ENCODE measurements at regions of chr9 and their contacts with region 1.

Region 1: GRCh38 chr9:118395415-118395814 is 691.2 kb downstream of the TLR4 start:
- DNase-seq: peak; percentile 65
- ATAC-seq: peak; percentile 97
- H3K4me3 ChIP-seq: no peak overlapping the region
- H3K27ac ChIP-seq: no peak overlapping the region
- H3K4me1 ChIP-seq: no peaks in the 10 kb centered on the region
- H3K27me3 ChIP-seq: no peaks in the 10 kb centered on the region
- CTCF ChIP-seq: no peak
- EP300 ChIP-seq: peak in 1 of 2 experiments; percentile 58; a peak in 1 of 4 replicates
- POLR2A ChIP-seq: no peak
- RAD21 ChIP-seq: no peak

Region 2: DNA sequence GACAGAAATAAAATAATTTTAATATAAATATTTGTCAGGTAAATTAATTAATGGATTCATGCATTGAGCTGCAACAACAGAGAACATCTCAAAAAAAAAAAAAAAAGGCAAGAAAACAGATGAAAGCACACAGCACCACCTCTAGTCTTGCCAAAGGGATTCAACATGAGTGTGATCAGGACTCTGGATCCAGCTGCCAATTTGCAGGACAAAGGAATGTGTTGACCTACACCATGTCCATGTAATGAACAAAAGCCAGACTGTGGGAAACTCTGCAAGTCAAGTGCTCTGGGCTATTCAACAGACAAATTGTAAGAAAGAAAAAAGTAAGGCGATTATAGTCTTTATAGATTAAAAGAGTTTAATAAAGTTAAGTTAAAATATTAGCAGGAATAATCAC is 78.1 kb after region 1 on chr9:
- CTCF ChIA-PET with region 1: no interaction called
- POLR2A ChIA-PET with region 1: no interaction called
- RAD21 ChIA-PET with region 1: no interaction called
- SMC1A ChIA-PET with region 1: no interaction called
- in situ Hi-C with region 1: no loop called
- intact Hi-C with region 1: no loop called
- DNase-seq: no peak
- ATAC-seq: no peak
- H3K4me3 ChIP-seq: no peak overlapping the region
- H3K27ac ChIP-seq: no peak overlapping the region
- H3K4me1 ChIP-seq: no peaks in the 10 kb centered on the region
- H3K27me3 ChIP-seq: no peaks in the 10 kb centered on the region
- CTCF ChIP-seq: no peak
- EP300 ChIP-seq: no peak
- POLR2A ChIP-seq: no peak
- RAD21 ChIP-seq: no peak

Region 3: GRCh38 chr9:118529210-118529609 is 133.8 kb after region 1 on chr9:
- CTCF ChIA-PET with region 1: no interaction called
- POLR2A ChIA-PET with region 1: no interaction called
- RAD21 ChIA-PET with region 1: no interaction called
- SMC1A ChIA-PET with region 1: no interaction called
- in situ Hi-C with region 1: no loop called
- intact Hi-C with region 1: loop called (anchors 1 kb)
- DNase-seq: no peak
- ATAC-seq: peak; percentile 87
- H3K4me3 ChIP-seq: no peak overlapping the region
- H3K27ac ChIP-seq: no peak overlapping the region
- H3K4me1 ChIP-seq: no peaks in the 10 kb centered on the region
- H3K27me3 ChIP-seq: no peaks in the 10 kb centered on the region
- CTCF ChIP-seq: no peak
- EP300 ChIP-seq: peak in 1 of 2 experiments; percentile 35; a peak in 1 of 4 replicates
- POLR2A ChIP-seq: no peak
- RAD21 ChIP-seq: no peak

Region 4: GRCh38 chr9:118992813-118993794 is 597.7 kb after region 1 on chr9:
- CTCF ChIA-PET with region 1: no interaction called
- POLR2A ChIA-PET with region 1: no interaction called
- RAD21 ChIA-PET with region 1: no interaction called
- SMC1A ChIA-PET with region 1: no interaction called
- in situ Hi-C with region 1: no loop called
- intact Hi-C with region 1: no loop called
- DNase-seq: no peak
- ATAC-seq: no peak
- H3K4me3 ChIP-seq: no peak overlapping the region
- H3K27ac ChIP-seq: no peak overlapping the region
- H3K4me1 ChIP-seq: no peaks in the 10 kb centered on the region
- H3K27me3 ChIP-seq: no peaks in the 10 kb centered on the region
- CTCF ChIP-seq: no peak
- EP300 ChIP-seq: no peak
- POLR2A ChIP-seq: no peak
- RAD21 ChIP-seq: no peak

Measured in GM12878 (cell line).